H1 (cell line): ENCODE measurements at regions of chr1 and their contacts with region 1.

Region 1: GRCh38 chr1:66725885-66726665 is 26.2 kb upstream of the DYNLT5 start:
- DNase-seq: peak; percentile 31 to 68
- H3K4me3 ChIP-seq: no peak overlapping the region
- H3K27ac ChIP-seq: no peak overlapping the region
- H3K4me1 ChIP-seq: peaks cover 0 to 4% (median 2%) of the 10 kb centered on the region in 4 experiments; a peak in 2 of 7 replicates
- H3K27me3 ChIP-seq: no peaks in the 10 kb centered on the region
- CTCF ChIP-seq: peak; percentile 24 to 92 (median 78)
- EP300 ChIP-seq: no peak
- POLR2A ChIP-seq: no peak
- RAD21 ChIP-seq: peak; percentile 87 to 89

Region 2: GRCh38 chr1:66607458-66607857 is 118.6 kb before region 1 on chr1:
- CTCF ChIA-PET with region 1: interaction called, 26 read pairs
- POLR2A ChIA-PET with region 1: no interaction called
- DNase-seq: peak in 1 of 2 experiments; percentile 50
- H3K4me3 ChIP-seq: no peak overlapping the region
- H3K27ac ChIP-seq: no peak overlapping the region
- H3K4me1 ChIP-seq: no peaks in the 10 kb centered on the region
- H3K27me3 ChIP-seq: no peaks in the 10 kb centered on the region
- CTCF ChIP-seq: peak; percentile 51 to 59 (median 51)
- EP300 ChIP-seq: no peak
- POLR2A ChIP-seq: no peak
- RAD21 ChIP-seq: peak; percentile 71 to 75

Region 3: GRCh38 chr1:66711420-66711819 is 14.7 kb before region 1 on chr1:
- CTCF ChIA-PET with region 1: interaction called, 23 read pairs
- POLR2A ChIA-PET with region 1: no interaction called
- DNase-seq: no peak
- H3K4me3 ChIP-seq: no peak overlapping the region
- H3K27ac ChIP-seq: no peak overlapping the region
- H3K4me1 ChIP-seq: peaks cover 0 to 4% (median 0%) of the 10 kb centered on the region in 4 experiments; a peak in 1 of 7 replicates
- H3K27me3 ChIP-seq: no peaks in the 10 kb centered on the region
- CTCF ChIP-seq: peak; percentile 12 to 48 (median 27); a peak in 3 of 4 replicates
- EP300 ChIP-seq: no peak
- POLR2A ChIP-seq: no peak
- RAD21 ChIP-seq: peak; percentile 48 to 54